Activated B cell treated with CpG ODN at 0.5 μM for 24 hours (primary cell): ENCODE measurements at regions of chr19 and their contacts with region 1.

Region 1: GRCh38 chr19:14571695-14572490 is at the start of gene NDUFB7:
- DNase-seq: peak; percentile 81
- ATAC-seq: peak; percentile 84
- H3K4me3 Mint-ChIP-seq: peak within 1 kb of the TSS; percentile 96
- H3K27ac Mint-ChIP-seq: peak within 1 kb of the TSS; percentile 92
- H3K4me1 Mint-ChIP-seq: peaks cover 57% of the 10 kb centered on the region
- H3K27me3 Mint-ChIP-seq: no peaks in the 10 kb centered on the region
- CTCF ChIP-seq: peak; percentile 65
- total RNA-seq, gene NDUFB7: 108 and 129 TPM in 2 replicates

Region 2: GRCh38 chr19:14517840-14518505 is 53.9 kb before region 1 on chr19 and contains the start of gene DNAJB1:
- CTCF ChIA-PET with region 1: no interaction called
- POLR2A ChIA-PET with region 1: interaction called, 25 read pairs
- intact Hi-C with region 1: loop called (anchors 1 kb)
- DNase-seq: peak; percentile 78
- ATAC-seq: peak; percentile 48
- H3K4me3 Mint-ChIP-seq: peak within 1 kb of the TSS; percentile 91
- H3K27ac Mint-ChIP-seq: peak within 1 kb of the TSS; percentile 95
- H3K4me1 Mint-ChIP-seq: peaks cover 65% of the 10 kb centered on the region
- H3K27me3 Mint-ChIP-seq: no peaks in the 10 kb centered on the region
- CTCF ChIP-seq: no peak
- total RNA-seq, gene DNAJB1: 56.1 and 58.7 TPM in 2 replicates

Region 3: GRCh38 chr19:14603990-14604387 is 32.1 kb after region 1 on chr19:
- CTCF ChIA-PET with region 1: interaction called, 22 read pairs
- POLR2A ChIA-PET with region 1: interaction called, 47 read pairs
- intact Hi-C with region 1: loop called (anchors 1 kb)
- DNase-seq: peak; percentile 39
- ATAC-seq: peak; percentile 88
- H3K4me3 Mint-ChIP-seq: peak overlapping the region; percentile 72
- H3K27ac Mint-ChIP-seq: peak overlapping the region; percentile 93
- H3K4me1 Mint-ChIP-seq: peaks cover 62% of the 10 kb centered on the region
- H3K27me3 Mint-ChIP-seq: no peaks in the 10 kb centered on the region
- CTCF ChIP-seq: no peak

Region 4: DNA sequence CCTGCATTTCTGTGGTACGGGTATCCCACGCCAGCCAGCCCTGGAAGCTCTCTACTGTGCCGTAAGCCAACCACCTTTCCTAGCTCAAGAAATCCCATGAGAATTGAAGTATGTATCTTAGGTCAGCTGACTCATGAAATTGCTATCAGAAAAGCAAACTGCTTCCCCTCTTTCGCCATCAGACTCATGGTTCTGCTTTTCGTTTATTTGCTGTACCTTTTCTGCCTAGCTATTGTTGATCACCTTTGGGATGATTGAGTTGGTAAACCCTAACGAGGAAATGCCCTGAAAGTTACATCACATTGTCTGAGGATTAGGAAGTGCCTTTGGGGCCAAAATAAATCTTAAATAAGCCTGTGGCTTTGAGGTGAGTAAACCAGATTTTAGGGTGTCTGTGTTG is 102.9 kb after region 1 on chr19 and contains the start of gene ADGRE3:
- CTCF ChIA-PET with region 1: interaction called, 16 read pairs
- POLR2A ChIA-PET with region 1: interaction called, 6 read pairs
- intact Hi-C with region 1: no loop called
- DNase-seq: no peak
- ATAC-seq: peak; percentile 70
- H3K4me3 Mint-ChIP-seq: peak within 1 kb of the TSS; percentile 49
- H3K27ac Mint-ChIP-seq: peak within 1 kb of the TSS; percentile 78
- H3K4me1 Mint-ChIP-seq: peaks cover 32% of the 10 kb centered on the region
- H3K27me3 Mint-ChIP-seq: no peaks in the 10 kb centered on the region
- CTCF ChIP-seq: no peak
- total RNA-seq, gene ADGRE3: not detected in 2 replicates

Region 5: DNA sequence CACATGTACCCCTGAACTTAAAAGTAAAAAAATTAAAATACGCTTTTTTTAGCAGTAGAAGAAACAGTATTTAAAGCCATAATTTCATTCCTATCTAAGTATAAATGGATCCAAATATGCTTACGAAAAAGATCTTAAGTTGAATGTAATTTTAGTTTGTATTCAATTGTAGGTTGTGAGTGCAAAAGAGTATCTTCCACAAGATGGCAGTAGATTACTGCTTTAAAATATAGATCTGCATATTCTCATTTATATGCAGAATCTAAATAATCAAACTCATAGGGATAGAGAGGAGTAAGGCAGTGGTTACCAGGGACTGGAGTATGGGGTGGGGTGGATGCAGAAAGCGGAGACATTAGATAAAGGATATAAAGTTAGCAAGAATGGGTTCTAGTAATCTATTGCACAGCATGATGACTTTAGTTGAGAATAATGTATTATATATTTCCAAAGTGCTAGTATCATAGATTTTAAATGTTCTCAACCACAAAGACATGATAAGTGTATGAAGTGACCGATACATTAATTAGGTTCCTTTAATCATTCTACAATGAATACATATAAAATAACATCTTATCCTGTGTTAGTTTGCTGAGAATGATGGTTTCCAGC is 299.8 kb after region 1 on chr19:
- CTCF ChIA-PET with region 1: no interaction called
- POLR2A ChIA-PET with region 1: no interaction called
- intact Hi-C with region 1: loop called (anchors 5 kb)
- DNase-seq: no peak
- ATAC-seq: no peak
- H3K4me3 Mint-ChIP-seq: no peak overlapping the region
- H3K27ac Mint-ChIP-seq: no peak overlapping the region
- H3K4me1 Mint-ChIP-seq: no peaks in the 10 kb centered on the region
- H3K27me3 Mint-ChIP-seq: peaks cover 22% of the 10 kb centered on the region
- CTCF ChIP-seq: peak; percentile 38

Region 6: DNA sequence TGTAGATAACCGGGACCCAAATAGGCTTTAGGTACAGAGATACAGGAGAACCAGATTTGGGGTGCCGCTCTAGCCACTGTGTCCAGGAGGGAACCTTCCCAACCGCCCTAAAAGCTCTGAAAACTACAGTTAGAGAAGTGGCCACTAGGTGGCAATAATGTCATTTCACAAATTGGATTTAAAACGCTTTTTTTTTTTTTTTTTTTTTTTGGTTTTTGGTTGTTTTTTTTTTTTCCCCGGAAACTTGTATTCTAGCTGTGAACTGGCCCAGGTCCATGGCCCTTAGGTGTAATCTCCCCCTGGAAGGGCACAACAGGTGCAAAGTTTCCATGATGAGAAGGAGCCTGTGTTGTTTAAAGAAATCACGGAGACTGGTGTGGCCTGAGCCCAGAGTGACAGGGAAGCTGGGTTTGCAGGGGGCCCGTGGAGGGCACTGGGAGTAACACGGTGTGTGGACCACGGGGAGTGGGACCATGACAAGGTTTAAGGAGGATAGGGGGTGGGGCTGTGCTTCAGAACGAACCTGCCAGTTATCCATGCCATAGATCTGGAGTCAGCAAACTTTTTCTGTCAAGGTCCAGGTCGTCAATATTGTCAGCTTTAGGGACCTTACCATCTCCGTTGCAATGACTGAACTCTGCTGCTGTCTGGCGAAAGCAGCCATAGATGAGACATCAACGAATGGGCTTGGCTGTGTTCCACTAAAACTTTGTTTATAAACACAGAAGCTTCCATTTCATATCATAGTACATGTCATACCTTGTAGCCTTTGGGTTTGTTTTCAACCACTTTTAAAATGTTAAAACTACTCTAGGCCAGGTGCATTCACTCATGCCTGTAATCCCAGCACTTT is 520.2 kb after region 1 on chr19:
- CTCF ChIA-PET with region 1: interaction called, 3 read pairs
- POLR2A ChIA-PET with region 1: no interaction called
- intact Hi-C with region 1: loop called (anchors 5 kb)
- DNase-seq: no peak
- ATAC-seq: peak; percentile 47
- H3K4me3 Mint-ChIP-seq: no peak overlapping the region
- H3K27ac Mint-ChIP-seq: no peak overlapping the region
- H3K4me1 Mint-ChIP-seq: peaks cover 3% of the 10 kb centered on the region
- H3K27me3 Mint-ChIP-seq: peaks cover 9% of the 10 kb centered on the region
- CTCF ChIP-seq: peak; percentile 59